ENCODE measurements at regions of chr18 and their contacts with region 1.

Region 1: GRCh38 chr18:54828986-54829385 is 709 bp downstream of the RAB27B start:
- DNase-seq: no peak
- ATAC-seq: no peak
- H3K4me3 ChIP-seq: peak overlapping the region; percentile 53 to 74
- H3K27ac ChIP-seq: no peak overlapping the region
- H3K4me1 ChIP-seq: no peaks in the 10 kb centered on the region
- H3K27me3 ChIP-seq: no peaks in the 10 kb centered on the region
- CTCF ChIP-seq: no peak

Region 2: DNA sequence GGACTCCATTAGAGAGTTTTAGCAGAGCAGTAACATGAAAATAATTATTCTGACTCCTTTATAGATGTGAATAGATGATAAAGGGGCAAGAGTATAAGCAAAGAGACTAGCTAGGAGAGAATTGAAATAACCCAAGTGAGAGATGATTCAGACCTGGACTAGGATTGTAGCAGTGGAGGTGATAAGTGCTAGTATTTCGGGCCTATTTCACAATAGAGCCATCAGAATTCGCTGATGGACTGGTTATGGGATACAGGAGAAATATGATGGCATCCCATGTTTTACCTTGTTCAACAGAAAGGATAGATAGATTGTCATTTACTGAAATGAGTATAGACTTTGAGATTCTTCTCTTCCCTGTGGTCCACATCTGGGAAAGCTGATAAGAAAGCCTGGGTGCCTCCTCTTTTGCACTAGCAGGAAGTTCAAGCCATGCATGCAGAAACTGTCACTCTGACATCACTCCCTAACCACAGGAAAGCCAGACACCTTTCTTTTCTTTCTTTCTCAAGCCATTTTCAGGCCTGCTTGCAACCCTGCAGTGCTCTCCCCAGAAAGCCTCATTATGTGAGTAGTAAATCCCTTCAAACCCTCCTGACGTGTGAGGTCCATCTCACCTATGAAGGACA is 212.7 kb before region 1 on chr18:
- CTCF ChIA-PET with region 1: no interaction called
- POLR2A ChIA-PET with region 1: interaction called, 11 read pairs
- in situ Hi-C with region 1: no loop called
- intact Hi-C with region 1: no loop called
- DNase-seq: no peak
- ATAC-seq: no peak
- H3K4me3 ChIP-seq: no peak overlapping the region
- H3K27ac ChIP-seq: no peak overlapping the region
- H3K4me1 ChIP-seq: no peaks in the 10 kb centered on the region
- H3K27me3 ChIP-seq: no peaks in the 10 kb centered on the region
- CTCF ChIP-seq: no peak